ENCODE measurements at regions of chr1 and their contacts with region 1.

Region 1: DNA sequence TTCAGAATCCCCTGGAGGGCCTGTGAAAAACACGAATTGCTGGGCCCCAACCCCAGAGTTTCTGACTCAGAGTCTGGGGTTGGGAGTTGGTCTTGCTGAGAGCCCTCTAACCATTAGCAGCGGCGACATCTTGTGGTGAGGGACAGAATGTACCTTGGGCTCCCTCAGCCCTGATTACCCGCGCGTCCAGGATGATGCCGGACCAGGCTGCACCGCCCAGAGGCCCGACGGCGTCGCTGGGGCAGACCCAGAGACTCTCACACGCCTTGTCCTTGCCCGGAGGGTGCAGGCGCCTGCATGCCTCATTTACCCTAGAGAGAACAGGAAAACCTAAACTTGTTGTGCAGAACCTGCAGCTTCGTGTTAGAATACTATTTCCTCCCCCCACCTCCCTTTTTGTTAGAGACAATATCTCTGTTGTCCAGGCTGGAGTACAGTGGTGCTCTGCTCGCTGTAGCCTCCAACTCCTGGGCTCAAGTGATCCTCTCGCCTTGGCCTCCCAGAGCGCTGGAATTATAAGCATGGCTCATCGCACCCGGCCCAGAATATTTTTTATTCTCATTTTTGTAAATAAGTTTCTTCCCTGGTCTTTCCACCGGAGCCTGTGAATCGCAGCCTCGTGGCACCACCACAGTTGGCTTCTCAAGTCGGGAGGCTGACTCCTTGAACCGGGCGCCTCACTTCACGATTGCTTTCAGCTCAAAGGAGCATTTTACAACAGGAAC is 22.2 kb upstream of the RD3 start:
- DNase-seq: peak; percentile 80
- H3K4me3 Mint-ChIP-seq: peak overlapping the region; percentile 25
- H3K27ac Mint-ChIP-seq: no peak overlapping the region
- H3K4me1 Mint-ChIP-seq: peaks cover 43% of the 10 kb centered on the region
- H3K27me3 Mint-ChIP-seq: no peaks in the 10 kb centered on the region

Region 2: GRCh38 chr1:211198111-211198510 is 316.1 kb before region 1 on chr1:
- CTCF ChIA-PET with region 1: no interaction called
- POLR2A ChIA-PET with region 1: no interaction called
- DNase-seq: no peak
- H3K4me3 Mint-ChIP-seq: no peak overlapping the region
- H3K27ac Mint-ChIP-seq: no peak overlapping the region
- H3K4me1 Mint-ChIP-seq: no peaks in the 10 kb centered on the region
- H3K27me3 Mint-ChIP-seq: peaks cover 10% of the 10 kb centered on the region

Region 3: DNA sequence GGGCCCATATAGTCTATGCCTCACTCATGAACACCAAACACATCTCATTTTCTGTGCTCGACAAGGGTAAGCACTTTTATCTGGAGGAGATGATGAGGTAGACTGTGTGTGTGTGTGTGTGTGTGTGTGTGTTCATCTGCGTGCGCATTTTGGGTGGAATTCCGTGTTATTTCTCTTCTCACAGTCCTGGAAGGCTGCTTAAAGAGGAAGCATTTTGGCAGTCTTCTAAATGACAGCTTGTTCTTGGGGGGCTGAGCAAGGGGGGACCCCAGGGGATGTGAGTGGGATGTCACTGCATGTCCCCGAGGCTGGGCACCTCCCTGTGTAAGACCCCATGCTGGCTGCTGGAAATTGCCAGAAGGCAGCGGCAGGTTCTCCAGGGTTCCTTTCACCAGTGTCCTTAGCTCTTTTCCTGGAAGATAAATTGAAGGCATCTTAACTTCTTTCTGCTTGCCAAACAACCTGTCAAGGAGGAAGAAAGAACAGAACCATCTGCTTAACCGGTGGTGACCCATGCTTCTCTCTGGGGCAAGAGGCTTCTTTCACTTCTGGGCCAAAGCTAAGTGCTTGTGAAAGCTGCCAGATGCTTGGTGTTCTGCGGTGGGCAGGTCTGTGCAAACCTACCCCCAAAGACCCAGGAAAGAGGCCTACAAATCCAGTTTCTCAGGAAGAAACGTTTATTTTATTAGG is 12.3 kb before region 1 on chr1:
- CTCF ChIA-PET with region 1: interaction called, 17 read pairs
- POLR2A ChIA-PET with region 1: no interaction called
- DNase-seq: no peak
- H3K4me3 Mint-ChIP-seq: no peak overlapping the region
- H3K27ac Mint-ChIP-seq: no peak overlapping the region
- H3K4me1 Mint-ChIP-seq: peaks cover 2% of the 10 kb centered on the region
- H3K27me3 Mint-ChIP-seq: peaks cover 6% of the 10 kb centered on the region

Measured in activated CD4-positive, alpha-beta T cell treated with anti-CD3 and anti-CD28 coated beads, Interleukin-2, amount 10 ng/mL, durations not matched to agents 7 days and 5 days (primary cell).